ENCODE measurements at regions of chr10 and their contacts with region 1.

Region 1: DNA sequence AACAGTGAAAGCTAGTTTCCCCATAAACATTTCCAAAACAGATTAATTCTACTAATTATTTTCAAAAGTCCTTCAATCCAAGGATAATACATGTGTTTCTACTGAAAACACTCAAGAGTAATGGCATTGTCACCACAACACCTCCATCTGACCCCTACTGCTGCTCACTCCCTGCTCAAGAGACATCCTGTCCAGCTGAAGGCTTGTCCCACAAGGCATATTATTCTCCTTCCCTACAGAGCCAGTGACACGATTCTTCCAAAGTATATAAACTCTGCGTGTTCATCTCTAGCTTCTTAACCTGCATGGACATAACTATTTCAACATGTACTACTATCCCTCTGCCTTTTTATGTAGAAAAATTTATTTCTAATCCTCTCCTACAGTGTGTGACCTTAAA is 182.1 kb downstream of the CPEB3 start:
- DNase-seq: no peak
- ATAC-seq: no peak
- H3K4me3 ChIP-seq: no peak overlapping the region
- H3K27ac ChIP-seq: no peak overlapping the region
- H3K4me1 ChIP-seq: peaks cover 17% of the 10 kb centered on the region
- H3K27me3 ChIP-seq: no peaks in the 10 kb centered on the region
- CTCF ChIP-seq: no peak

Region 2: GRCh38 chr10:92208736-92209327 is 100.1 kb after region 1 on chr10:
- CTCF ChIA-PET with region 1: interaction called, 13 read pairs
- POLR2A ChIA-PET with region 1: no interaction called
- intact Hi-C with region 1: no loop called
- DNase-seq: peak; percentile 43
- ATAC-seq: no peak; the same call in 1 of the 2 replicates
- H3K4me3 ChIP-seq: no peak overlapping the region
- H3K27ac ChIP-seq: peak overlapping the region; percentile 58
- H3K4me1 ChIP-seq: peaks cover 27% of the 10 kb centered on the region; the same call in 1 of the 2 replicates
- H3K27me3 ChIP-seq: no peaks in the 10 kb centered on the region
- CTCF ChIP-seq: no peak

Region 3: GRCh38 chr10:92377962-92378361 is 269.2 kb after region 1 on chr10:
- CTCF ChIA-PET with region 1: no interaction called
- POLR2A ChIA-PET with region 1: no interaction called
- intact Hi-C with region 1: no loop called
- DNase-seq: no peak
- ATAC-seq: no peak
- H3K4me3 ChIP-seq: no peak overlapping the region
- H3K27ac ChIP-seq: no peak overlapping the region
- H3K4me1 ChIP-seq: no peaks in the 10 kb centered on the region
- H3K27me3 ChIP-seq: no peaks in the 10 kb centered on the region
- CTCF ChIP-seq: no peak